Activated naive CD4-positive, alpha-beta T cell treated with anti-CD3 and anti-CD28 coated beads for 36 hours (primary cell): ENCODE measurements at regions of chr3 and their contacts with region 1.

Region 1: DNA sequence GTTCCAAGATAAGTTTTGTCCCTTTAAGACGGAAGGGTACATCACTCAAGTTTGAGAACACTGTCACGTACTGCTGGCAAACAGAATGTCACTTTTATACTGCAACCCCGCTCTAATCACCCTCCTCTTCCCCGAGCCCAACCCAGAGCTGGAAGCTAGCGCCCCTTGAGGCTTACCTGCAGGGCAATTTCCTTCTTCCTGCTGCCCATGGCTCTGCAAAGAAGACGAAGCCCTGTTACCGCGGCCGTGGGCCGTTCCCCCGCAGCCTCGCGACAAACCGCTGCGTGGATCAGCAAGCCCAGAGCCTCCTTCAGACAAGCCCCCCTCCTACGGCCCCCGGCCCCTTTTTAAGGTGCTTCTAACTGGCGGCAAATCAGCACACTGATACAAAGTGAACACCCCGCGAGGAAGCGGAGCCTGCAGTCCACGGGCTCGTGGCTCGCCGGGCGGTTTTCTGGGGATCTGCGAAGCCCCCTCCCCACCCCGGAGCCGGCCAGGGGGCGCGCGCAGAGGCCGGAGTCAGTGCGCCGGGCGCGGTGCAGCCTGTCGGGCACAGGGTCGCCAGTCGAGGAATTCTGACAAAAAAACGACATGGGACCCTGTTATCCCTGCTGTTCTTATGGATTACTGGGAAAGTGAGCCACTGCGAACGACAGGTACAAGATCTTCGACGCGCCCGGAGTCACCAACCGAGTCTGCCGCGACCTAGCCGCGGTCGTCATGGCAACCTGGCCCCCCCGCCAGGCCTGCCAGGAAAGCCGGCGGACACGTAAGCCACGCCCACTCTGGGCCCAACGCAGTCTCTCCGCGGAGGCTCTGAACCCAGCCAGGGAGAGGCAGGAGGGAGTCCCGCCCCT is at the start of gene NME9:
- DNase-seq: peak; percentile 92
- H3K4me3 Mint-ChIP-seq: peak within 1 kb of the TSS; percentile 91
- H3K27ac Mint-ChIP-seq: peak within 1 kb of the TSS; percentile 86
- H3K4me1 Mint-ChIP-seq: peaks cover 47% of the 10 kb centered on the region
- H3K27me3 Mint-ChIP-seq: no peaks in the 10 kb centered on the region
- total RNA-seq, gene NME9: 2.0 to 2.4 TPM

Region 2: DNA sequence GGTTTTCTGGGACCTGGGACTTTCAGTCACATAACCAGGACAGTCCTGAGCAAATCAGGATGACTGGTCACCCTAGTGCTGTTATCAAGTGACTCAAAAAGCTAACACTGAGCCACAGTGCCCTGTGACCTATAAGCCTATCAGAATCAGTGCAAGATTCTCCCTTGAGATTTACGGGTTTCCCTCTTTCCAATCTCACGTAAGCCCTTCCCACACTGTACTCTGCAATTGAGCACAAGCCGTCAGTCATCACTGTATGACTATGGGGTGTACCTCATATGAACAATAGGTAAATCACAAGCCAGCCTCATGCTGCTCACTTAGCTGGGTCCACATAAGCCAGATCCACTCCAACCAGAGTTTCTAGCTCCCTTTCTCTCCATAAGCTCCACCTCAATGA is 340.4 kb before region 1 on chr3:
- CTCF ChIA-PET with region 1: no interaction called
- intact Hi-C with region 1: no loop called
- DNase-seq: no peak
- H3K4me3 Mint-ChIP-seq: no peak overlapping the region
- H3K27ac Mint-ChIP-seq: no peak overlapping the region
- H3K4me1 Mint-ChIP-seq: no peaks in the 10 kb centered on the region
- H3K27me3 Mint-ChIP-seq: peaks cover 2% of the 10 kb centered on the region

Region 3: DNA sequence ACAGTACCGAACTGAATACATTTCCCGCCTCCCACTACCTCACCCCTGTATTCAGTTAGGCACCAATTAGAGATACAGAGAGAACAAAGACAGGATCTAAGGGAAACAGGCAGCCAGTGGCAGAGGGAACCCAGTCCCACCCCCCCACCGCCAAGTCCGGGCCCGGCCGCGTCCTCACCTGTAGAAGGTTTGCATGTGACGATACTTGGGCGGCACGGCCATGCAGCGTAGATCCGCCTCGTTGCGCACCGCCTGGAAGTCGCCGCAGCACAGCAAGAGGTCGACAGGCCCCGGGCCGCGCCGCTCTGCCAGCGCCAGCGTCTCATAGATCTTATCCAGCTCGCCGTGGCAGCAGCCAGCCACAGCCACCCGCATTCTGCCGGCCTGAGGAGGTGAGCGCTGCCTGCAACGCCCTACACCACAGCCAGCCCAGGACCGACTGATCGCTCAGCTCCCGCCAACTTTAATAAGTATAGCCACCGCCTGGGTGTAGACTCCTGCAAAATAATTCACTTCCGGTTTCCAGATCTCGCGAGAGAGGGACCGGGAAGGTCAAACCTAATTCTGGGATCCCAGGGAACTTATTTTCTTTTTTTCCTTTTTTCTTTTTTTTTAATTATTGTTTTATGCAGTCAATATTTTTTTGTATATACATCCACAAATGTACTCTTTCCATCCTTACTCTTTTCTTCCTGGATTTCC is 154.8 kb before region 1 on chr3 and contains the start of gene DBR1:
- CTCF ChIA-PET with region 1: interaction called, 12 read pairs
- intact Hi-C with region 1: loop called (anchors 1 kb)
- DNase-seq: peak; percentile 89
- H3K4me3 Mint-ChIP-seq: peak within 1 kb of the TSS; percentile 97
- H3K27ac Mint-ChIP-seq: peak within 1 kb of the TSS; percentile 97
- H3K4me1 Mint-ChIP-seq: peaks cover 37% of the 10 kb centered on the region
- H3K27me3 Mint-ChIP-seq: no peaks in the 10 kb centered on the region
- total RNA-seq, gene DBR1: 20.0 to 22.3 TPM

Region 4: GRCh38 chr3:138234401-138235179 is 94.8 kb before region 1 on chr3:
- CTCF ChIA-PET with region 1: interaction called, 4 read pairs
- intact Hi-C with region 1: loop called (anchors 2 kb)
- DNase-seq: no peak
- H3K4me3 Mint-ChIP-seq: no peak overlapping the region
- H3K27ac Mint-ChIP-seq: no peak overlapping the region
- H3K4me1 Mint-ChIP-seq: peaks cover 25% of the 10 kb centered on the region
- H3K27me3 Mint-ChIP-seq: no peaks in the 10 kb centered on the region

Region 5: GRCh38 chr3:138296639-138297038 is 32.7 kb before region 1 on chr3:
- CTCF ChIA-PET with region 1: interaction called, 8 read pairs
- intact Hi-C with region 1: loop called (anchors 1 kb)
- DNase-seq: peak; percentile 74
- H3K4me3 Mint-ChIP-seq: peak overlapping the region; percentile 15
- H3K27ac Mint-ChIP-seq: peak overlapping the region; percentile 88
- H3K4me1 Mint-ChIP-seq: peaks cover 38% of the 10 kb centered on the region
- H3K27me3 Mint-ChIP-seq: no peaks in the 10 kb centered on the region

Region 6: DNA sequence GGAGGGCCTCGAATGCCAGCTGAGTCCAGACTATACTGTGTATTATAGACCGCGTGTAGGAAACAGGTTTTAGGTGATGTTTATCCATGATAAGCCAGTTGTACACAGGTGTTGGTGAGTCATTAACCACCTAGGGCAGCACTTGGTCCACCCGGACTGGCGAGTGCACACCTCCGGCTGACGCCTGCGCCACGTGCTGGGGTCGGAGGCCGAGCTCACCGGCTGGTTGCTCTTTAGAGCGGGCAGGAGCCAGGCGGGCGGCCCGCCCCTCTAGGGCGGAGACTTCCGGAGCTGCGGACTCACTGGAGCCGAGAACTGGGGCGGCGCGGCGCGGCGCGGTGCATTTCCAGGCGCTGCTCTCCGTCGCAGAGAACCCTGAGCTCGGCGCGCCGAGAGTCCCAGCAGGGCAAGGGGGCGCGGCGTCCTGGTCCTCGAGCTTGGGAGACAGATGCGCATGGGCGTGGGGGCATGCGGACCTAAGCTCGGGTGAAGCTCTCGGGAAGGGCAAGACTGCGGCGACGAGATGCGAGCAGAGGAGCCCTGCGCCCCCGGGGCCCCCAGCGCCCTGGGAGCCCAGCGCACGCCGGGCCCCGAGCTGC is 105.0 kb after region 1 on chr3 and contains the start of gene ESYT3:
- CTCF ChIA-PET with region 1: interaction called, 9 read pairs
- intact Hi-C with region 1: loop called (anchors 5 kb)
- DNase-seq: peak; percentile 82
- H3K4me3 Mint-ChIP-seq: peak within 1 kb of the TSS; percentile 75
- H3K27ac Mint-ChIP-seq: no peak within 1 kb of the TSS
- H3K4me1 Mint-ChIP-seq: peaks cover 11% of the 10 kb centered on the region
- H3K27me3 Mint-ChIP-seq: peaks cover 55% of the 10 kb centered on the region
- total RNA-seq, gene ESYT3: 0.96 to 1.1 TPM

Region 7: GRCh38 chr3:138824114-138824506 is 494.8 kb after region 1 on chr3:
- CTCF ChIA-PET with region 1: no interaction called
- intact Hi-C with region 1: no loop called
- DNase-seq: no peak
- H3K4me3 Mint-ChIP-seq: no peak overlapping the region
- H3K27ac Mint-ChIP-seq: no peak overlapping the region
- H3K4me1 Mint-ChIP-seq: peaks cover 17% of the 10 kb centered on the region
- H3K27me3 Mint-ChIP-seq: no peaks in the 10 kb centered on the region

Region 8: GRCh38 chr3:138935848-138936740 is 606.7 kb after region 1 on chr3:
- CTCF ChIA-PET with region 1: no interaction called
- intact Hi-C with region 1: loop called (anchors 5 kb)
- DNase-seq: peak; percentile 78
- H3K4me3 Mint-ChIP-seq: peak overlapping the region; percentile 71
- H3K27ac Mint-ChIP-seq: no peak overlapping the region
- H3K4me1 Mint-ChIP-seq: peaks cover 34% of the 10 kb centered on the region
- H3K27me3 Mint-ChIP-seq: peaks cover 70% of the 10 kb centered on the region